ENCODE measurements at regions of chrX and their contacts with region 1.

Region 1: DNA sequence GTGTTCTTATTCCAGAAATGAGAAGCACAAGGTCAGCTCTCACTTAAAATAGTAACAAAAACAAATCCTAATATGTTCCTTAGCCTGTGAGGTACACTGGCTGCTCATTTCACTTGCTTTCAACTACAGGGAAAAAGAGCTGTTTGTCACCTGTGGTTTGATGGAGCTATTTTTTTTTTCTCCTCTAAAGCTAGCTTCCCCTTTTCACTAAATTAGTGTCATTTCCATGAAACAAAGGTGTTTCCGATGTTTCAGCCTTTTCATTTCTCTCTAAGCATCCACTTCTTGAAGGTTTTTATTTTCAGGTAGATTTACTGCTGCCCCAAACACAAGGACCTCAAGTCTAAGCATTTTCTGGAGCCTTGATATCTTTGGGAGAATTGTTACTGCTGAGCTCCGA is 148.6 kb downstream of the RBMX2 start:
- DNase-seq: no peak
- H3K4me3 ChIP-seq: no peak overlapping the region
- H3K27ac ChIP-seq: no peak overlapping the region
- H3K4me1 ChIP-seq: peaks cover 0 to 3% (median 0%) of the 10 kb centered on the region in 4 experiments; a peak in 1 of 7 replicates
- H3K27me3 ChIP-seq: no peaks in the 10 kb centered on the region
- CTCF ChIP-seq: no peak
- EP300 ChIP-seq: no peak
- POLR2A ChIP-seq: no peak
- RAD21 ChIP-seq: no peak

Region 2: GRCh38 chrX:130435937-130436336 is 114.4 kb before region 1 on chrX:
- CTCF ChIA-PET with region 1: no interaction called
- POLR2A ChIA-PET with region 1: no interaction called
- DNase-seq: no peak
- H3K4me3 ChIP-seq: no peak overlapping the region
- H3K27ac ChIP-seq: no peak overlapping the region
- H3K4me1 ChIP-seq: no peaks in the 10 kb centered on the region
- H3K27me3 ChIP-seq: no peaks in the 10 kb centered on the region
- CTCF ChIP-seq: no peak
- EP300 ChIP-seq: no peak
- POLR2A ChIP-seq: no peak
- RAD21 ChIP-seq: no peak

Region 3: GRCh38 chrX:130539721-130540321 is 10.5 kb before region 1 on chrX:
- CTCF ChIA-PET with region 1: interaction called, 10 read pairs
- POLR2A ChIA-PET with region 1: interaction called, 3 read pairs
- DNase-seq: peak in 1 of 2 experiments; percentile 52
- H3K4me3 ChIP-seq: no peak overlapping the region
- H3K27ac ChIP-seq: no peak overlapping the region
- H3K4me1 ChIP-seq: no peaks in the 10 kb centered on the region
- H3K27me3 ChIP-seq: no peaks in the 10 kb centered on the region
- CTCF ChIP-seq: peak; percentile 20 to 55 (median 43)
- EP300 ChIP-seq: no peak
- POLR2A ChIP-seq: no peak
- RAD21 ChIP-seq: peak; percentile 46 to 71